Right ventricle myocardium superior (tissue), 1 donor: ENCODE measurements at regions of chr7 and their contacts with region 1.

Region 1: GRCh38 chr7:873367-874002 is 2.9 kb upstream of the GET4 start:
- DNase-seq: peak; percentile 90
- ATAC-seq: peak; percentile 51

Region 2: GRCh38 chr7:786472-787255 is 86.8 kb before region 1 on chr7:
- intact Hi-C with region 1: loop called (anchors 2 kb)
- DNase-seq: peak; percentile 85
- ATAC-seq: peak; percentile 86

Region 3: GRCh38 chr7:821688-822087 is 51.8 kb before region 1 on chr7:
- intact Hi-C with region 1: loop called (anchors 5 kb)
- DNase-seq: peak; percentile 36
- ATAC-seq: peak; percentile 71

Region 4: GRCh38 chr7:927031-927671 is 53.7 kb after region 1 on chr7:
- intact Hi-C with region 1: no loop called
- DNase-seq: peak; percentile 33
- ATAC-seq: no peak